T-cell (primary cell): ENCODE measurements at regions of chr19 and their contacts with region 1.

Region 1: GRCh38 chr19:52112624-52113023 is 17.1 kb upstream of the ZNF841 start:
- DNase-seq: no peak
- ATAC-seq: no peak
- H3K4me3 ChIP-seq: no peak overlapping the region
- H3K4me3 Mint-ChIP-seq: no peak overlapping the region
- H3K27ac ChIP-seq: no peak overlapping the region
- H3K27ac Mint-ChIP-seq: no peak overlapping the region
- H3K4me1 ChIP-seq: no peaks in the 10 kb centered on the region
- H3K4me1 Mint-ChIP-seq: no peaks in the 10 kb centered on the region
- H3K27me3 ChIP-seq: no peaks in the 10 kb centered on the region
- H3K27me3 Mint-ChIP-seq: no peaks in the 10 kb centered on the region

Region 2: GRCh38 chr19:52148256-52148655 is 35.6 kb after region 1 on chr19:
- CTCF ChIA-PET with region 1: no interaction called
- POLR2A ChIA-PET with region 1: interaction called in 1 of 2 experiments, 17 read pairs
- DNase-seq: no peak
- ATAC-seq: no peak
- H3K4me3 ChIP-seq: no peak overlapping the region
- H3K4me3 Mint-ChIP-seq: no peak overlapping the region
- H3K27ac ChIP-seq: no peak overlapping the region
- H3K27ac Mint-ChIP-seq: no peak overlapping the region
- H3K4me1 ChIP-seq: no peaks in the 10 kb centered on the region
- H3K4me1 Mint-ChIP-seq: no peaks in the 10 kb centered on the region
- H3K27me3 ChIP-seq: no peaks in the 10 kb centered on the region
- H3K27me3 Mint-ChIP-seq: no peaks in the 10 kb centered on the region

Region 3: DNA sequence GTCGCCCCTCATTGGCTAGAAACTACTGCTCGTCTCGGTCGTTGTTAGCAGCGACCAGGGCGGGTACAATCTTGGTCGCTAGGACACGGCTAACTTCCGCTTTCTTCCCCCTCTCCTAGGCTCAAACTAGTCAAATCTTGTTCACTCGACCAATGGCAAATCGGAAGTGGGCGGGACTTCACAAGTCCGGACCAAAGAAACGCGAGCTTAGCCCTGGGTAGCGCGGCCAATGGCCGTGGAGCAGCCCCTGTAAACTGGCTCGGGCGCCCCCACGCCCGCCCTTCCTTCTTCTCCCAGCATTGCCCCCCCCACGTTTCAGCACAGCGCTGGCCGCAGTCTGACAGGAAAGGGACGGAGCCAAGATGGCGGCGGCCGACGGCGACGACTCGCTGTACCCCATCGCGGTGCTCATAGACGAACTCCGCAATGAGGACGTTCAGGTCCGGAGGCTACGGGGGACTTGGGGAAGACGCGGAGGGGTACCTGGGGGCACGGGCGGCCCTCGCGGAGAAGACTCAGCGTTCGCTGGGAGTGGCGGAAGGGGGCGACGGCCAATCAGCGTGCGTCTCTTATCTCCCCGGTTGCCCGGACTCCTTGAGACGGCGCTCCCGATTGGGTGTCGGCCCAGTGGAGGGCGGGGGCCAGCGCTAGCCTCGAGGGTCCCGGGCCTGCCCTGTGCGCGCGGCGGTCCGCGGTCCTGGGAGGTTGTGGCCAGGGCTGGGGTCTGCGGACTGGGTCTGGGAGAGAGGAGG is 77.3 kb after region 1 on chr19 and contains the start of gene PPP2R1A:
- CTCF ChIA-PET with region 1: no interaction called
- POLR2A ChIA-PET with region 1: no interaction called
- DNase-seq: peak; percentile 87 to 100 (median 99)
- ATAC-seq: peak; percentile 85 to 89 (median 88)
- H3K4me3 ChIP-seq: peak within 1 kb of the TSS; percentile 90 to 91
- H3K4me3 Mint-ChIP-seq: peak within 1 kb of the TSS; percentile 97 to 98 (median 97)
- H3K27ac ChIP-seq: peak within 1 kb of the TSS; percentile 96
- H3K27ac Mint-ChIP-seq: peak within 1 kb of the TSS; percentile 100
- H3K4me1 ChIP-seq: peaks cover 12 to 52% of the 10 kb centered on the region in 2 experiments
- H3K4me1 Mint-ChIP-seq: peaks cover 45 to 56% (median 51%) of the 10 kb centered on the region in 3 donors
- H3K27me3 ChIP-seq: no peaks in the 10 kb centered on the region
- H3K27me3 Mint-ChIP-seq: no peaks in the 10 kb centered on the region
- total RNA-seq, gene PPP2R1A: 177 to 203 (median 191) TPM